K562 (cell line): ENCODE measurements at regions of chr11 and their contacts with region 1.

Region 1: GRCh38 chr11:106156290-106156937 is 79.0 kb downstream of the AASDHPPT start:
- DNase-seq: peak; percentile 10 to 35 (median 18)
- ATAC-seq: peak; percentile 46; the same call in 1 of the 3 replicates
- H3K4me3 ChIP-seq: no peak overlapping the region
- H3K27ac ChIP-seq: no peak overlapping the region
- H3K4me1 ChIP-seq: no peaks in the 10 kb centered on the region
- H3K27me3 ChIP-seq: no peaks in the 10 kb centered on the region
- CTCF ChIP-seq: peak; percentile 19 to 37 (median 21); a peak in 3 of 6 replicates
- EP300 ChIP-seq: no peak
- POLR2A ChIP-seq: no peak
- RAD21 ChIP-seq: peak; percentile 49 to 57

Region 2: DNA sequence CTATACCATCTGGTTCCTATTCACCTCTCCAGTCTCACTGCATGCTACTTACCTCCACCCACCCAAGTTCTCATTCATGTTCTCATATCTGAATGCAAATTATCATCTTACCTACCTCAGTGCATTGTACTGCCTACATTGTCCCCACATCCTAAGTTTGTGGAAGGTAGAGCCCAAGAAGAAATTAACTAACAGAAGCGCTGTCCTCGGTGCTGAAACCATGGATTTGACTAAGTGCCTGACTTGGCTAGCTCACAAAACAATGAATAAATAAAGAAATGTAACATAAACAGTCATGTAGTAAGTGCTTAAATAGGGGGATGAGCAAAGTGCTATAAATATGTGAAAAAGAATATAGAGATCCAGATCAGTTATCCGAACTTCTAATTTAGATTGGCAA is 483.3 kb before region 1 on chr11:
- CTCF ChIA-PET with region 1: no interaction called
- POLR2A ChIA-PET with region 1: no interaction called
- in situ Hi-C with region 1: no loop called
- intact Hi-C with region 1: no loop called
- DNase-seq: peak; percentile 2 to 31 (median 6)
- ATAC-seq: no peak
- H3K4me3 ChIP-seq: no peak overlapping the region
- H3K27ac ChIP-seq: no peak overlapping the region
- H3K4me1 ChIP-seq: no peaks in the 10 kb centered on the region
- H3K27me3 ChIP-seq: no peaks in the 10 kb centered on the region
- CTCF ChIP-seq: no peak
- EP300 ChIP-seq: no peak
- POLR2A ChIP-seq: no peak
- RAD21 ChIP-seq: no peak

Region 3: DNA sequence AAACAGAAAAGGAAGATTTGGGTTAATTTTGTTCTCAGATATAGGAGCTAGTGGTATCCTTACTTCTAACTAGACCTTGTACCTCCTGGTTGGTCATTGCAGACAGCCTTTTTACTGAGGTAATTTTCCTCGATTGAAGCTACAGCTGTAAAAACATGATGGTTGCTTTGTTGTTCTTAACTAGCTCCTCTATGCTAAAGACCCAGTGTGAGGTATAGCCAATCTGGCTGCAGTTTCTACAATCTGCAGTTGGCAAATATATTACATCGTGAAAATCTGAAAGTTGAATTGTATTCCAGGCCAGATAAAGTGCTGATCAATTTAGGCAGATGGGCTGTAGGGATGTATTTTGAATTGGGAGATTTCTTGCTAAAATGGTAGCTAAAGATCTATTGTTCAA is 37.6 kb after region 1 on chr11:
- CTCF ChIA-PET with region 1: no interaction called
- POLR2A ChIA-PET with region 1: no interaction called
- in situ Hi-C with region 1: no loop called
- intact Hi-C with region 1: no loop called
- DNase-seq: no peak
- ATAC-seq: no peak
- H3K4me3 ChIP-seq: no peak overlapping the region
- H3K27ac ChIP-seq: no peak overlapping the region
- H3K4me1 ChIP-seq: no peaks in the 10 kb centered on the region
- H3K27me3 ChIP-seq: no peaks in the 10 kb centered on the region
- CTCF ChIP-seq: no peak
- EP300 ChIP-seq: no peak
- POLR2A ChIP-seq: no peak
- RAD21 ChIP-seq: no peak

Region 4: DNA sequence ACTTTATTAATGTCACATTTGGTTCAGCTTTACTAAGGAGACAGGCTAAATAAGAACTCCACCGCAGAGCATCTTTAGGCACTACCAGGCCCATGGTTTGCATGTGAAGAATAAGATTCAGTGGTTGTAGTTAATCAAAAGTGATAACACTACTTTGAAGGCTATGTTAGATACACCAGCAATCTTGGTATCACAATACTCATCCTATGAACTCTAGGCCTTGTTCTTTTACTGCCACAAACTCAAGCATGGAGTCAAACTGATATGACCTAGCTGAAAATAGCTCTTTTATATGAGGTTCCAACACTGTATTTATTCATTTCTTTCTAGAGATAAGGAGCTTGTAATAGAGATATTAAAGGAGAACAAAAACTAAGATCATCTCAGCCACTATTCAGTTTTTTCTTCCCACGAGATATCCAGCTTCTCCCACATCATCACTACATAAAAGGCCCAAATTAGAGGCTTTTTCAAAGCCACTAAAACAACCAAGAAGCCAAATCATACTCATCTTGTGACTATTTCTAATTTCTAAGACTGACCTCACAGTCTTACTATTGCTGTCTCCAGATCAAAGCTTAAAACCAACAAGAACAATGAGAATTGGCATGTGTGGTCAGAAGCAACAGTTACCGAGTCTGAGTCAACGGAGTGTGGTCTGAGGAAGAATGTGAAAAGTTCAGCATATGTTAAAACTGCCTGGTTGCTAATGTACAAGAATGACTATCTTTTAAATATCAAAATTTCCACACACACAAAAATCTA is 887.0 kb after region 1 on chr11:
- CTCF ChIA-PET with region 1: no interaction called
- POLR2A ChIA-PET with region 1: no interaction called
- in situ Hi-C with region 1: no loop called
- intact Hi-C with region 1: loop called (anchors 10 kb)
- DNase-seq: no peak
- ATAC-seq: no peak
- H3K4me3 ChIP-seq: no peak overlapping the region
- H3K27ac ChIP-seq: no peak overlapping the region
- H3K4me1 ChIP-seq: no peaks in the 10 kb centered on the region
- H3K27me3 ChIP-seq: no peaks in the 10 kb centered on the region
- CTCF ChIP-seq: no peak
- EP300 ChIP-seq: no peak
- POLR2A ChIP-seq: no peak
- RAD21 ChIP-seq: no peak